AG04449 (cell line): ENCODE measurements at regions of chr1 and their contacts with region 1.

Region 1: DNA sequence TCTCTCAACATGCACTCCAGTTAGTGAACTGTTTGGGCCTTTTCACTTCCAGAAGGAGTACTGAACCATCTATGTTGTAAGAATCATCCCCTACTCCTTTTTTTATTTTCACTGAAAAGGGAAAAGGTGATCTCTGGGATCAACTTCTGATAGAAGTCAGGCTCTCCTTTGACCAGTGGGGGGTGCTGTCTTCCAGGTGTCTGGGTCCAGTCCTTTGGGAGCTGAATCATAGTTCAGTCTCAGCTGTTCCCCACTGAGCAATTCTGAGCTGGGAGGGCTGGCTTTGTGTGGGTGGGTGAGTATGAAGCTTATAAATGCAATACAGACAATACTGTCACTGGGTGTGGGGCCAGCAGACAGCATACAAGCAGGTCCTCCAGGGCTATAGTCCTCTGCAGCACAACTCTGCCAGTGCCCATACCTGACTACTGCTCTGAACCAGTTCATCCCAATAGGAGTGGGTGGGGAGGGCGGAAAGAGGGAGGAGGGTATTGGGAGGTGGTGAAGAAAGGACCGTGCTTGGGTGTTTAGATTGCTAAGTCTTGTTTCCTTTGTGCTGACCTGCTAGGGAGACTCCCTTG is 12.5 kb upstream of the SARS1 start:
- DNase-seq: no peak
- H3K4me3 ChIP-seq: no peak overlapping the region
- CTCF ChIP-seq: peak; percentile 69

Region 2: GRCh38 chr1:109181105-109181806 is 20.0 kb before region 1 on chr1:
- CTCF ChIA-PET with region 1: interaction called, 11 read pairs
- POLR2A ChIA-PET with region 1: no interaction called
- DNase-seq: peak; percentile 23
- H3K4me3 ChIP-seq: no peak overlapping the region
- CTCF ChIP-seq: no peak

Region 3: GRCh38 chr1:109213785-109214468 is 12.7 kb after region 1 on chr1 and contains the start of gene SARS1:
- CTCF ChIA-PET with region 1: interaction called, 100 read pairs
- POLR2A ChIA-PET with region 1: interaction called, 18 read pairs
- DNase-seq: no peak
- H3K4me3 ChIP-seq: peak within 1 kb of the TSS; percentile 98
- CTCF ChIP-seq: no peak